Activated CD4-positive, alpha-beta T cell treated with anti-CD3 and anti-CD28 coated beads for 36 hours (primary cell): ENCODE measurements at regions of chr3 and their contacts with region 1.

Region 1: DNA sequence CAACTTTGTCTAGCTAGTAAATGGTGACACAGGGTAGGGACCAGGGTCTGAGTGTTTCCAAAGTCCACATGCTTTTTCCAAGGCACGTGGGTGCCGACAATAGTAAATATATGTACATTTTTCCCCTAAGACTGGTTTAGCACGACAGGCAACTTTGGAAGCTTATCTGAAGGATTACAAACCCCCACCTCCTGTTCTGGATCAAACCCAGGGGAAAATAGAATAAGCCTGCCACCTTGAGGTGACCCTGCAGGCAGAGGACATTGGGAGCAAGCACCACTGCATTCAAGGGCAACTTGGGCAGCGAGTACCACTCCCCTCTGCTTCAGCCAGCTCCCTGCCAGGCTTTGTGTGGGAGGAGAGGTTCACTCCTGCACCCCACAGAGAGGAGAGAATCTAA is 44.8 kb downstream of the KBTBD12 start:
- DNase-seq: peak; percentile 17
- ATAC-seq: no peak
- H3K4me3 Mint-ChIP-seq: no peak overlapping the region
- H3K27ac Mint-ChIP-seq: no peak overlapping the region
- H3K4me1 Mint-ChIP-seq: no peaks in the 10 kb centered on the region
- H3K27me3 Mint-ChIP-seq: peaks cover 5% of the 10 kb centered on the region

Region 2: DNA sequence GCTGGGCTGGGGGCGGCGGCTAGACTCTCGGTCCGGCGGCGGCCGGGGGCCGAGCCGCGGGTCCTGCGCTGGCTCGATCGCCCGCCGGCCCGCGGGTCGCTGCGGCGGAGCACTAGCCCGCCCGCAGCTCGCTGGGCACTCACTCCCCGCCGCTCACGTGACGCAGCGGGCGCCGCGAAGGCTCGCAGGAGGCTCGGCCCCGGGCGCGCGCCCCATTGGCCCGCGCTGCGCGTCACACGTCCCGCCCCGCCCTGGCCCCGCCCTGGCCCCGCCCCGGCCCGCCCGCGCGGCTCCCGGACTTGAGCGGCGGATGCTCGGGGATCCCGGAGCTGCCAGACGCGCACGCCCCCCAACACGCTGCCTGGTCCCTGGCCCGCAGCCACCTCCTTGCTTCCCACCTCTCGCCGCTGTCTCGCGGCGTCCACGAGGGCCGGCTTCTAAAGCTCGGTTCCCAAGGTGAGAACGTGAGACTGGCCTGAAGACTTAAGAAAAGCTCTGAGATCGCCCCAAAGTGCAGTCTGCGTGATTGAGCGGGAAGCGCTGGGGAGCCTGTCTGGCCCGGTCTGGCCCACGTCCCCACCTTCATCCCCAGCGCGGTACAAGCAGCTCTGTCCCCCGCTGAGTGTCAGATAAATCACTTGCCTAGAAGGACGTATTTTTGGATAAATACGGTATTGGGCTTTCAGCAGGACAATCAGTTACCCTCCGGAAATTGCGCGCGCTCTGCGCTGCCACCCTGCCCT is 1602.4 kb before region 1 on chr3 and contains the start of gene KLF15:
- CTCF ChIA-PET with region 1: no interaction called
- POLR2A ChIA-PET with region 1: no interaction called
- intact Hi-C with region 1: loop called in 1 of 2 experiments (anchors 10 kb)
- DNase-seq: peak; percentile 87
- ATAC-seq: peak; percentile 95
- H3K4me3 Mint-ChIP-seq: peak within 1 kb of the TSS; percentile 73
- H3K27ac Mint-ChIP-seq: no peak within 1 kb of the TSS
- H3K4me1 Mint-ChIP-seq: peaks cover 9% of the 10 kb centered on the region
- H3K27me3 Mint-ChIP-seq: peaks cover 44% of the 10 kb centered on the region
- total RNA-seq, gene KLF15: 0.32 to 0.53 TPM

Region 3: DNA sequence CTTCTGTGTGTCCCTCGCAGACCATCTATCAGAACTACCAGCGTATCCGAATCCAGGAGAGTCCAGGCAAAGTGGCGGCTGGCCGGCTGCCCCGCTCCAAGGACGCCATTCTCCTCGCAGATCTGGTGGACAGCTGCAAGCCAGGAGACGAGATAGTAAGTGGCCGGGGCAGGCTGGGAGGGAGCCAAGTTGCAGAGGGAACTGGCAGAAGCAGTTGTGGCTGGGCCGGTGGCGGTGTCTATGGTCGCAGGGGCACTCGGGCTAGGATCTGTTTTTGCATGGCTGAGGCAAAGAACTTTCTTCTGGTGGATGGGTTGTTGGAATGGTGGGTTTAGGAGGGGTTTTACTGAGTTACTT is 351.5 kb before region 1 on chr3:
- CTCF ChIA-PET with region 1: no interaction called
- POLR2A ChIA-PET with region 1: no interaction called
- intact Hi-C with region 1: no loop called
- DNase-seq: no peak
- ATAC-seq: no peak
- H3K4me3 Mint-ChIP-seq: no peak overlapping the region
- H3K27ac Mint-ChIP-seq: no peak overlapping the region
- H3K4me1 Mint-ChIP-seq: peaks cover 3% of the 10 kb centered on the region
- H3K27me3 Mint-ChIP-seq: no peaks in the 10 kb centered on the region

Region 4: GRCh38 chr3:128145337-128145736 is 185.5 kb after region 1 on chr3:
- CTCF ChIA-PET with region 1: no interaction called
- POLR2A ChIA-PET with region 1: no interaction called
- intact Hi-C with region 1: no loop called
- DNase-seq: no peak
- ATAC-seq: no peak
- H3K4me3 Mint-ChIP-seq: no peak overlapping the region
- H3K27ac Mint-ChIP-seq: no peak overlapping the region
- H3K4me1 Mint-ChIP-seq: no peaks in the 10 kb centered on the region
- H3K27me3 Mint-ChIP-seq: no peaks in the 10 kb centered on the region